ENCODE measurements at regions of chr5 and their contacts with region 1.

Region 1: GRCh38 chr5:180291943-180292831 is at the start of gene MAPK9:
- DNase-seq: peak; percentile 97
- H3K27ac ChIP-seq: peak within 1 kb of the TSS; percentile 85
- CTCF ChIP-seq: no peak

Region 2: GRCh38 chr5:180026320-180026719 is 265.9 kb before region 1 on chr5:
- CTCF ChIA-PET with region 1: no interaction called
- POLR2A ChIA-PET with region 1: no interaction called
- DNase-seq: peak; percentile 51
- H3K27ac ChIP-seq: no peak overlapping the region
- CTCF ChIP-seq: no peak

Region 3: DNA sequence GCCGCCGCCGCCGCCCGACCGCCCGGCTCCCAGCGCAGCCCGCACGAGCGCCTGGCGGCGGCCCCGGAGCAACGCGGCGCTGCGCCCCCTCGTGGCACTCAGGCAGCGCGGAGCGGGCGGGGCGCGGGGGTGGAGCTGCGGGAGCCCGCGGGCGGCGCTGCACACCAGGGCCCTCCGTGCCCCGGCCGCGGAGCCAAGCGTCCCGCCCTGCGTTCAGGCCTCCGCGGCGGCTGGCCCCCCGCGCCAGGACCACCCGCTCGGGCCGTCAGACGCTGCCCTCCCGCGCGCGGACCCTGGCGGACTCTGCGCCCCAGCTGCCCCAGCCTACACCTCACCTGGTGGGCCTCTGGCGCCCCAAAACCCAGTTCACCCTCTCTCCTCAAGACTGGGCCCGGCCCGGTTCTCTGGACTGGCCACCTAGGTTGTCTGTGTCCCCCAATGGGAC is 83.0 kb before region 1 on chr5 and contains the start of gene RASGEF1C:
- CTCF ChIA-PET with region 1: interaction called, 14 read pairs
- POLR2A ChIA-PET with region 1: no interaction called
- DNase-seq: peak; percentile 82
- H3K27ac ChIP-seq: no peak within 1 kb of the TSS
- CTCF ChIP-seq: peak; percentile 85

Region 4: DNA sequence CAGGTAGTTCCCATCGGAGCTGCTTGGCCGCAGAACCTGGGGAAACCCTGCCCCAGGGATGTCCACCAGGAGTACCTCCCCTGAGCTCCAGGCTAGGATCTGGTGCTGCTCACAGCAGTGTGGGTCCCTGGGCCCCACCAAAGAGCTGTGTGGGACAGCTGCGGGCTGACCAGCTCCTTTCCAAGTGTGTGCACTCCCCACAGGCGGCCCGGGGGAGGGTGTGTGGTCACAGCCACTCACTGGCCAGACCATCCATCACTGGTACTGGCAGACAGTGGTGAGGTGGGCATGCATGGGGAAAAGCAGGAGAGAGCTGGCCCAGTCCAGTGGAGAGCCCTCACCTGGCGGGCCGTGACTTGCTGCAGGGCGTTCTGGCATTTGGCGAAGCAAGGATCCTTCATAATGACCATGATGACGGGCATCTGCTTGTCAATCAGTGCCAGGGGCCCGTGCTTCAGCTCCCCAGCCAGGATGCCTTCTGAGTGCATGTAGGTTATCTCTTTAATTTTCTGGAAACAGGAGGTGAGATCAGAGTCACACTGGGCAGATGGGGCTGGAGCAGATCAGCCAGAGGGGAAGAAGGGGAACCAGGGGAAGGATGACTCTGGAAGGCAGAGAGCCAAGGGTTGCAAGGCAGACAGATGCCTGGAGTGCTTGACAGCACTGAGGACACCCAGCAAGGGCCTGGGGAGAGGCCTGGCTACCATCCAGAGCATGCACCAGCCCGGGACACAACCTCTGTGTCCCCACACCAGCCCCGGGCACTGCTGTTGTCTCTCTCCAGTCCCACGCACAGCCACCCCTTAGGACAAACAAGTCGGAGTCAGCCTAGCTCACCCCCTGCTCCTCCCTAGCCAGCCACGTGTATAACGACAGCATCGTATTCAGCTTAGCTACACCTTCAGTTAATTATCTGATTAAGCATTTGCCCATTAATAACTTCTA is 12.5 kb after region 1 on chr5:
- CTCF ChIA-PET with region 1: interaction called, 14 read pairs
- POLR2A ChIA-PET with region 1: no interaction called
- DNase-seq: no peak
- H3K27ac ChIP-seq: no peak overlapping the region
- CTCF ChIP-seq: no peak

Region 5: DNA sequence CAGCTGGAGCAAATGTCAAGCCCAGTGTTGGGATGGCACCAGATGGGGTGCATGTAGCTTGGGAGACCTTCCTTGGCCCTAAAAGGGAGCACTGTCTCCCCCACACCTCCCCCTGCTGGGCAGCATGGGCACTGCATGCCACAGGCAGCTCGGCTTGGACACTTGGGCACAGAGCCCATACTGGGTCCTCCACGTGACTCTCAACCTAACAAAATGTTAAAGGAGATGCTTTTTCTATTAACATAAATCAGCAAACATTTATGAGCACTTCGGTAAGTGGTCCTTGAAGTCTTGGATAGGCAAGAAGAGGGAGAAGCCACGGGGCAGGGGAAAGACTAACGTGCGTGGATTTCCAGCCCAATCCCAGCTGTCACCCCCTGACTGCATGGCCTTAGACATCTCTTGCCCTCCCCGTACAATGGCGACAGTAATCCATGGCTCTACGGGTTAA is 23.6 kb after region 1 on chr5:
- CTCF ChIA-PET with region 1: interaction called, 20 read pairs
- POLR2A ChIA-PET with region 1: interaction called, 3 read pairs
- DNase-seq: no peak
- H3K27ac ChIP-seq: no peak overlapping the region
- CTCF ChIP-seq: peak; percentile 79

Region 6: DNA sequence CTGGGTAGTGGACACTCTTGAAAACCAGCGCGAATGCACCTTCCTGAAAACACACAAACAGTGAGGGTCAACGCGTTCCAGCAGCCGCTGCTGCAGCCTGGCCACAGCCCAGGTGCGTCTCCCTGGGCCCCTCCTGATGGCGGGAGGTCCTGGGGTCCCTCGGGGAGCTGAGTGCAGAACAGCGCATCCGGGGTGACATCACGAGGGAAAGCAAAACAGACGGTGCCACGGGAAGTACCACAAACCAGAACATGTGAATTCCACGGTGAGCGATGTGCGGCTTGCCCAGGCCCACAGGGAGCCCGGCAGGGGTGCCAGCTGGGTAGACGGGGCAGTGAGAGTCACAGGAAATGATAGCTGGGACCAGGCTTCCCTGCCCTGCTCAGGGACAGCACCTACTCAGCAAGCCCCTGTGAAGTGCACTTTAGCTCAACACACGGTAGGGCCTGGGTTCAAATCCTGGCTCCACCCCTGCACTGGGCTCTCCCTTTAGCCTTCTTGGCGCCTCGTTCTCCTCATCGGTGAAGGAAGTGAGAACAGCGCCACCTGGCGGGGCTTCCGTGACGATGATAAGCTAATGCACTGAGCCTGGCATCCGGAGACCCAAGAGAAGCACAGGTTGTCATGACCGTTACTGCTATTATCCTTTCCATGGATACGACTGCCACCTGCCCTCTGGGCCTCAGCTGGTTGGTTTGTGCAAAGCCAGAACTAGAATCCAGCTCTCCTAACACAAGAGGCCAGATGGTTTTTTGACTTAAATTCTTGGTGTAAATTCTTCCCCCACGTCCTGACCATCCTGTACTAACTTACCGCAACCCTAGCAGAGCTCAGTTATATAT is 36.3 kb after region 1 on chr5:
- CTCF ChIA-PET with region 1: interaction called, 43 read pairs
- POLR2A ChIA-PET with region 1: interaction called, 4 read pairs
- DNase-seq: peak; percentile 76
- H3K27ac ChIP-seq: no peak overlapping the region
- CTCF ChIP-seq: peak; percentile 91

Region 7: DNA sequence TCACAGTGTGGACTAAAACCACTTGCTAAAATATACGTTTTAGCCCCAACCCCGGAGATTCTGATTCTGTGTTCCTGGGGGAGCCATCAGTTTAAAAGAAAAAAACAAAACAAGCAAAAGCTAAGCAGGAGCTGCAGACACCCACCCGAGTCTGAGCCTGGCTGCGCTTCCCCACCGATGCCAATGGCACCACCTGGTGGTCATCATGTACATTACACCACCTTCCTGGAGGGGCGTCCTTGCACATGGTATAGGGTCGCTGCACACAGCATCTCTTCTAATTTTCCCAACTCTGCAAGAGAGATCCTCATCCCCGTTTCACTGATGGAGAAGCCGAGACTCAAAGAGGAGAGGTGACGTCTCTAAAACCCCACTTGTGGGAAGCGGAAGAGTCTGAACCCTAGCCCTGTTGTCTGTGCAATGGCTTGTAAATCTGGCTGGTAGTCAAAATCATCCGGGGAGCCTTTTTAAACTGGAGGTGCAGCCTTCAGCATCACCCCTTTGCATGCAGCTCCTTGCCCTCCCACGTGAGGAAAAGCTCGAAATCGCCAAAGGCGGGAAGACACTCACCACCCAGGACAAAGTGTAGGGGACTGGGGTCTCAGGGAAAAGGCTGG is 178.9 kb after region 1 on chr5:
- CTCF ChIA-PET with region 1: interaction called, 55 read pairs
- POLR2A ChIA-PET with region 1: no interaction called
- DNase-seq: peak; percentile 72
- H3K27ac ChIP-seq: no peak overlapping the region
- CTCF ChIP-seq: peak; percentile 98

Region 8: DNA sequence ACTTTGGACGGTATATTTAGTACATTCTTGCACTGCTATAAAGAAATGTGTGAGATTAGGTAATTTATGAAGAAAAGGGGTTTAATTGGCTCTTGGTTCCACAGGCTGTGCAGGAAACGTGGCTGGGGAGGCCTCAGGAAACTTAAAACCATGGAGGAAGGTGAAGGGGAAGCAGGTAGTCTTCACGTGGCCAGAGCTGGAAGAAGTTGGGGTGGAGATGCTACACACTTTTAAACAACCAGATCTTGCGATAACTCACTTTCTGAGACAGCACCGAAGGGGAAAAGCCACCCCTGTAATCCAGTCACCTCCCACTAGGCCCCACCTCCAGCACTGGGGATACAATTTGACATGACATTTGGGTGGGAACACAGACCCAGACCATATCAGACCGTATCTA is 215.5 kb after region 1 on chr5:
- CTCF ChIA-PET with region 1: no interaction called
- POLR2A ChIA-PET with region 1: interaction called, 10 read pairs
- DNase-seq: no peak
- H3K27ac ChIP-seq: no peak overlapping the region
- CTCF ChIP-seq: no peak

Measured in RWPE1 (cell line).